ENCODE measurements at regions of chr17 and their contacts with region 1.

Region 1: DNA sequence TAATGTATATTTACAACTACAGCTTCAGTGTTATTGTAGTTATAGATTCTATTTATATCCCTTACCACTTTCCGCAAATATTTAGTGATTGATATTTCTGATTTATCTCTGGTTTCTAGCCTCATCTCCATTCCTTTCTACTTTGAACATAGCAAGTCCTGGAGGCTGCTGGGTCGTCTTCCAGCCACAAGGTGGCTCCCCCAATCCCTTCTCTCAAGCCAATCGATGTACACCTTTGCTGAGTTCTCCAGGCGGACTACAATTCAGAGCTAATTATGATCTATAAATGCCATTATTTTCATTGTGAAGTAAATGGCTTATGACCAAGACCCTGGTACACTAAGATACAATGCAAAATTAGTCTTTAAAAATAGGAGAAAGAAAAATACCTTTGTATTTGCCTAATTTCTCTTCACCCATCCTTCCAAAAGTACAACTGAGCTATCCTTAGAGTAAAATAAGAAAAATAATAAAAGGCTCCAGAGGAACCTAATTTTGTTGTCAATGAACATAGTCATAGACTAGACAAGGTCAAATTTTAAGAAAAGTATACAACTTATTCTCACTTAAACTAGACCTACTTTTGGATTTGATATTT is 122.1 kb downstream of the SKAP1 start:
- DNase-seq: peak; percentile 26 to 75 (median 41)
- ATAC-seq: peak; percentile 87
- H3K4me3 ChIP-seq: no peak overlapping the region
- H3K4me3 Mint-ChIP-seq: no peak overlapping the region
- H3K27ac ChIP-seq: no peak overlapping the region
- H3K27ac Mint-ChIP-seq: no peak overlapping the region
- H3K4me1 ChIP-seq: no peaks in the 10 kb centered on the region
- H3K4me1 Mint-ChIP-seq: peaks cover 55% of the 10 kb centered on the region
- H3K27me3 ChIP-seq: no peaks in the 10 kb centered on the region
- H3K27me3 Mint-ChIP-seq: no peaks in the 10 kb centered on the region
- CTCF ChIP-seq: peak; percentile 87

Region 2: GRCh38 chr17:48295362-48296288 is 12.3 kb before region 1 on chr17:
- CTCF ChIA-PET with region 1: interaction called, 13 read pairs
- POLR2A ChIA-PET with region 1: interaction called, 8 read pairs
- intact Hi-C with region 1: no loop called
- DNase-seq: peak in 4 of 14 experiments; percentile 19 to 68 (median 58)
- ATAC-seq: peak; percentile 84
- H3K4me3 ChIP-seq: peak overlapping the region; percentile 27
- H3K4me3 Mint-ChIP-seq: peak overlapping the region; percentile 65
- H3K27ac ChIP-seq: peak overlapping the region; percentile 45 to 72
- H3K27ac Mint-ChIP-seq: peak overlapping the region; percentile 84
- H3K4me1 ChIP-seq: peaks cover 20% of the 10 kb centered on the region
- H3K4me1 Mint-ChIP-seq: peaks cover 79% of the 10 kb centered on the region
- H3K27me3 ChIP-seq: no peaks in the 10 kb centered on the region
- H3K27me3 Mint-ChIP-seq: no peaks in the 10 kb centered on the region
- CTCF ChIP-seq: no peak

Region 3: DNA sequence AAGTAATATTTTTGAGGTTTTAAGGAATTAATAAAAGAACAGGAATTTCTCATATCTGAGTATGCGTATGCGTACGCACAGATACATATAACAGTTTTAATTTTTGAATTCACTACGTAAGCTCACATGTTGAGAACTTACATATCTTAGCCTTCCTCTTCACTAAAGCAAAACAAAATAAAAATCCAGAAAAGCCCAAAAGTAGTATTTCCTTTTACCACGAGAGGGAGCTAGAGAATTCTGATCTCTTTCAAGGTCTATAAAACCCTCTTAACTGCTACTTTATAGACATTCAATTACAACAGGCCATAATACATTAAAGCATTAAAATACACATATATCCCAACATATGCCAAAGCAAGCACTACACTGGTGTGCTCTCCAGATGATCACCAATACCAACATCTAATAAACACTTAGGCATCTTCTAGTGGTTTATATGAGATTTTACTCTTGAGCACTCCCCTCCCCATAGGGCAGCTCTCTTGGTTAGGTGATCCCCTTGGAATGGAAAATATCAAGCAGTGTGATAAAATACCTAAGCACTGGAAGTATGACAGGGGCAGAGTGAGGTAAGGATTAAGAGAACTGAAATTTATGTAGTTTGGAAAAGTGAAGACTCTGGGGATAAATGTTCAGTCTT is 28.1 kb after region 1 on chr17:
- CTCF ChIA-PET with region 1: interaction called, 15 read pairs
- POLR2A ChIA-PET with region 1: interaction called, 3 read pairs
- intact Hi-C with region 1: no loop called
- DNase-seq: peak in 3 of 14 experiments; percentile 74 to 79 (median 76)
- ATAC-seq: peak; percentile 66
- H3K4me3 ChIP-seq: no peak overlapping the region
- H3K4me3 Mint-ChIP-seq: no peak overlapping the region
- H3K27ac ChIP-seq: no peak overlapping the region
- H3K27ac Mint-ChIP-seq: no peak overlapping the region
- H3K4me1 ChIP-seq: no peaks in the 10 kb centered on the region
- H3K4me1 Mint-ChIP-seq: peaks cover 6% of the 10 kb centered on the region
- H3K27me3 ChIP-seq: no peaks in the 10 kb centered on the region
- H3K27me3 Mint-ChIP-seq: no peaks in the 10 kb centered on the region
- CTCF ChIP-seq: peak; percentile 85